ENCODE measurements at regions of chr6 and their contacts with region 1.

Region 1: GRCh38 chr6:138428944-138429598 is 25.0 kb downstream of the HEBP2 start:
- DNase-seq: peak; percentile 24
- H3K4me3 ChIP-seq: no peak overlapping the region
- CTCF ChIP-seq: peak; percentile 27

Region 2: GRCh38 chr6:138211027-138211581 is 218.0 kb before region 1 on chr6:
- CTCF ChIA-PET with region 1: no interaction called
- POLR2A ChIA-PET with region 1: no interaction called
- DNase-seq: no peak
- H3K4me3 ChIP-seq: no peak overlapping the region
- CTCF ChIP-seq: no peak

Region 3: GRCh38 chr6:138440758-138441357 is 11.8 kb after region 1 on chr6:
- CTCF ChIA-PET with region 1: interaction called, 40 read pairs
- POLR2A ChIA-PET with region 1: no interaction called
- DNase-seq: no peak
- H3K4me3 ChIP-seq: no peak overlapping the region
- CTCF ChIP-seq: no peak

Region 4: DNA sequence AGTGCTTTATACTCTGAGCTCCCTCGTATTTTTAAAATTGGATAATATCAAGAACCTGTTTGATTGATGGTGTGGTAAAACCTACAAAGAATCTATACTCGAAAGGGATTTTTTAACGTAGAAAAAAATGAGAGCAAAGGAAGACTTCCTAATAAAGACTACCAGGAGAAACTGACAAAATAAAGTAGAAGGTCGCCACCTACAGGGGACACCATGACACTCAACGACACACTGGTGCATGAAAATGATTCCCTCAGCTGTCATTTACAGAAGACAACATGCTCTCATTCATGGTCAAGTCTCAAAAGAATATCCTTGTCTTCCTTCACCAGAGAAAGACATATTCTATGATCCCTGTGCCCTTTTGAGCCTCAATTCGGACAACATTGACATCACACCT is 80.3 kb after region 1 on chr6:
- CTCF ChIA-PET with region 1: interaction called, 121 read pairs
- POLR2A ChIA-PET with region 1: no interaction called
- DNase-seq: no peak
- H3K4me3 ChIP-seq: no peak overlapping the region
- CTCF ChIP-seq: peak; percentile 21

Region 5: GRCh38 chr6:138526822-138527235 is 97.8 kb after region 1 on chr6:
- CTCF ChIA-PET with region 1: interaction called, 109 read pairs
- POLR2A ChIA-PET with region 1: no interaction called
- DNase-seq: no peak
- H3K4me3 ChIP-seq: no peak overlapping the region; the same call in 1 of the 2 replicates
- CTCF ChIP-seq: no peak

Region 6: DNA sequence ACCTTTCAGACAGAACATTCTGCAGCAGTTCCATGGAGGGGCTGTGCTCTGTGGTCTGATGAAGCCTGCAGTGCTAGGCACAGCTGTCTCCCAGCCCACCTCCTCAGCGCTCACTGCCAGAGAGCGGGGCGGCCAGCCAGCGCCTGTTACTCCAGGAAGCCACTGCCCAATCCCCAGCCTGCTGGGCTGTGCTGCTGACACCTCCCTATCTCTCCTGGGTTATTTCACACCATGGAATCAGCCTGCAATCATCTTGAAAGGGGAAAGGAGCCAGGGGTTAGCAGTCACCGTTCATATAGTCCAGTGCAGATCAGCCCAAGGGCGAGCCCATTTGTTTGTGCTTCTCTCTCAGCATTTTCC is 116.5 kb after region 1 on chr6:
- CTCF ChIA-PET with region 1: no interaction called
- POLR2A ChIA-PET with region 1: no interaction called
- DNase-seq: no peak
- H3K4me3 ChIP-seq: peak overlapping the region; percentile 45
- CTCF ChIP-seq: no peak

Region 7: DNA sequence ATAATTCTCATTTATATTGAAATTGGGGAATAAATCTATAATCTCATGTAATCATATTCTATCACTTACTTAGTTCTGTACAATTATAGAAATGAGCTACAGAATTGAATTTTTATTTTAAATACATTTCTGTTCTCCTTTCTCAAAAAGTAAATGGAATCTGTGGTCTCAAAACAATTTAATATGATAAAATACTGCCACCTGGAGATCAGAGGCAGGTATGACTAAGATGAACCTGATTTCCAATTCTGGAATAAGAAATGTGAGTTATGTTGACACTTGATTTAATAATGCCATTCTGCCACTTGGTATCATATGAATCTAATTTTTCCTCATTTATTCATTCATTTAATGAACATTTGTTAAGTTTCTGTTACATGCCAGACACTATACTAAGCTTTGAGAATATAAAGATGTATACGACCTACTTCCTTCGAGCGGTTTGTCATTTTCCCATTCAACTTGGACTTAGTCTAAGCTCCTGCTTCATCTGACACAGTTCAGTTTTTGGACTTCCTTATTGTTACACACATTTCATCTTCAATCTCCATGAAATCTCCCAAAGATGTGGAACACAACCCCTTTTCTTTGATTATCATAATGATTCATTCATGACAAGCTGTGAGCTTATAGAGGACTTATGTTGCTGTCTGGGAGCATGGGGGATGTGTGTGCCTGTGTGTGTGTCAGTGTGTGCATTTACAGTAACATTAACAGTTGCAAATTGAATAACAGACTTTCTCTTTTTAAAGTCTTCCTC is 337.0 kb after region 1 on chr6:
- CTCF ChIA-PET with region 1: interaction called, 33 read pairs
- POLR2A ChIA-PET with region 1: no interaction called
- DNase-seq: no peak
- H3K4me3 ChIP-seq: no peak overlapping the region
- CTCF ChIP-seq: peak; percentile 31

Region 8: DNA sequence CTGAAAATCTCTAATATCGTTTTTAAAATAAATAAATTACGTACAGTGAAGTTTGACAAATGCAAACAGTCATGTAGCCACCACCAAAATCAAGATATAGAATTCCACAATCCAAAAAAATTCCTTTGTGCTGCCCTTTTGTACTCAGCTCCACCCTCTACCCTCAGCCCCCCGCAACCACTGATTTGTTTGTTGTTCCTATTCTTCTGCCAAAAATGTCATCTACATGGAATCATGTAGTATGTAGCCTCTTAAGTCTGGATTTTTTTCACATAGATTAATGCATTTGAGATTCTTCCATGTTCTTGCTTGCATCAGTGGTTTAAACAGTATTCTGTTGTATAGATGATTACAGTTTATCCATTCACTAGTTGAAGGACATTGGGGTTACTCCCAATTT is 567.5 kb after region 1 on chr6:
- CTCF ChIA-PET with region 1: no interaction called
- POLR2A ChIA-PET with region 1: no interaction called
- DNase-seq: no peak
- H3K4me3 ChIP-seq: no peak overlapping the region
- CTCF ChIP-seq: no peak

Measured in AG04449 (cell line).